GM12878 (cell line): ENCODE measurements at regions of chr12 and their contacts with region 1.

Region 1: GRCh38 chr12:12356886-12357718 is at the start of gene BORCS5:
- DNase-seq: peak; percentile 94
- ATAC-seq: peak; percentile 92
- H3K4me3 ChIP-seq: peak within 1 kb of the TSS; percentile 71
- H3K27ac ChIP-seq: peak within 1 kb of the TSS; percentile 97
- H3K4me1 ChIP-seq: no peaks in the 10 kb centered on the region
- H3K27me3 ChIP-seq: no peaks in the 10 kb centered on the region
- CTCF ChIP-seq: peak; percentile 2 to 35 (median 24); a peak in 3 of 6 replicates
- EP300 ChIP-seq: peak in 1 of 2 experiments; percentile 59; a peak in 2 of 4 replicates
- POLR2A ChIP-seq: peak; percentile 96
- RAD21 ChIP-seq: no peak
- polyA plus RNA-seq, gene BORCS5: 1.4 to 1.7 TPM

Region 2: GRCh38 chr12:12081836-12082497 is 275.1 kb before region 1 on chr12:
- CTCF ChIA-PET with region 1: interaction called, 10 read pairs
- POLR2A ChIA-PET with region 1: no interaction called
- RAD21 ChIA-PET with region 1: interaction called, 14 read pairs
- SMC1A ChIA-PET with region 1: interaction called, 3 read pairs
- in situ Hi-C with region 1: no loop called
- intact Hi-C with region 1: no loop called
- DNase-seq: peak; percentile 39
- ATAC-seq: peak; percentile 96
- H3K4me3 ChIP-seq: no peak overlapping the region
- H3K27ac ChIP-seq: no peak overlapping the region
- H3K4me1 ChIP-seq: no peaks in the 10 kb centered on the region
- H3K27me3 ChIP-seq: no peaks in the 10 kb centered on the region
- CTCF ChIP-seq: peak; percentile 33 to 54 (median 34); a peak in 4 of 6 replicates
- EP300 ChIP-seq: no peak
- POLR2A ChIP-seq: no peak
- RAD21 ChIP-seq: peak; percentile 80

Region 3: DNA sequence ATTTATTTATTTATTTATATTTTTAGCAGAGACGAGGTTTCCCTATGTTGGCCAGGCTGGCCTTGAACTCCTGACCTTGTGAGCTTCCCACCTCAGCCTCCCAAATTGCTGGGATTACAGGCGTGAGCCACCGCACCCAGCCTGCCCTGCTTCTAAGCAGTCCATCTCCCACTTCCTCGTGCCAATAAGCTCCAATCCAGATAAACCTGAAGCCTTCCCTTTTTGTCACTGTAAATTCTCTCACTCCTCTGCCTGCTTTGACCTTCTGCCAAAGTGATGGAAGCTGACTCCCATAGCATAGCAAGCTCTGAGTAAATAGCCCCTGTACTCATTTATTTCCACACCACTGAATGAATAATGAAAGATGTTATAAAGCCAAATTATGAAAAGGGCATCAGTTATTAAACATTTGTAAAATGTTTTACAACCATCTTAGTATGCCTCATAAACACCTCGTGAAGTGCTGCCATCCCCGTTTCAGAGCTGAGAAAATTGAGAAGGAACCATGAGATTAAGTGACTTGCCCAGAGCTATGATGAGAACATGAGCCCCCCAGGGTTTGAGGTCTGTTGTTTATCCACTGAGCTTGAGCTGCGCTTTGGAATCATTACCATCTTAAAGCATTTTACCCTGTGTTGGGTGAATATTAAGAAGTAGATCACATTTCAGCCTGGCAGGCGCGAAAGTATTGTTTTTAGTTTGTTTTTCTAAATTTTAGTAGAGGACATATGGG is 37.5 kb before region 1 on chr12:
- CTCF ChIA-PET with region 1: no interaction called
- POLR2A ChIA-PET with region 1: no interaction called
- RAD21 ChIA-PET with region 1: no interaction called
- SMC1A ChIA-PET with region 1: no interaction called
- in situ Hi-C with region 1: no loop called
- intact Hi-C with region 1: no loop called
- DNase-seq: no peak
- ATAC-seq: no peak
- H3K4me3 ChIP-seq: no peak overlapping the region
- H3K27ac ChIP-seq: no peak overlapping the region
- H3K4me1 ChIP-seq: no peaks in the 10 kb centered on the region
- H3K27me3 ChIP-seq: no peaks in the 10 kb centered on the region
- CTCF ChIP-seq: no peak
- EP300 ChIP-seq: no peak
- POLR2A ChIP-seq: no peak
- RAD21 ChIP-seq: no peak

Region 4: DNA sequence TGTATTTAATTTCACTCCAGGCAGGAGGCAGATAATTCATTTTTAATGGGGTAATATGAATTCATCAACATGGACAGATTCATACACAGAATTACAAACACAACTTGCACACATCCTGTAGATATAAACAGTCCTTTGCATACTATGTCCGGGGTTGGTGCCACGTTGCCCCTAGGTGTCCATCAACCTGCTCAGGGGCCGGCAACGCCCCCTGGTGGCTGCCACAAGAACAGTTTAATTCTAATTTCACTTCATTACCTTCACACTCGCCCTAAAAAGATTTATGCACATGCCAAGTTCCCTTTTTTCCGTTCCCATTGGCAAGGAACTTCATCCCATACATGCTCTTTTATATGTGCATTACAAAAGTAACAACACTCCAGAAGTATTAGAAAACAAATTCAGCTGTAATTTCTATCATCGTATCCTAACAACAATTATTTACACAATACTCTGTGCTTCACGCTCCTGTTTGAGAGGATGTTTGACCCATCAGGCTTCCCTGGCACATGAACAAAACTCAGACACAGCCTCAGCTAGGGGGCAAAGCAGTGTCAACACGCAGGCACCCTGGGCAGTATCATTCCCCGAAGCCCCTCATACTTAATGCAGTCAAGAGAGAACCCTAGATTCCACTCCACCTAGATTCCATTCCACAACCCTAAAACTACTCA is 22.6 kb before region 1 on chr12:
- CTCF ChIA-PET with region 1: interaction called, 32 read pairs
- POLR2A ChIA-PET with region 1: interaction called, 3 read pairs
- RAD21 ChIA-PET with region 1: interaction called, 6 read pairs
- SMC1A ChIA-PET with region 1: interaction called, 8 read pairs
- in situ Hi-C with region 1: no loop called
- intact Hi-C with region 1: no loop called
- DNase-seq: peak; percentile 19
- ATAC-seq: peak; percentile 90
- H3K4me3 ChIP-seq: no peak overlapping the region
- H3K27ac ChIP-seq: no peak overlapping the region
- H3K4me1 ChIP-seq: 0 out of 2 replicates have a peak, but pooled peaks cover 3% of the 10 kb centered on the region
- H3K27me3 ChIP-seq: no peaks in the 10 kb centered on the region
- CTCF ChIP-seq: peak; percentile 81 to 89 (median 82)
- EP300 ChIP-seq: no peak
- POLR2A ChIP-seq: no peak
- RAD21 ChIP-seq: peak; percentile 58

Region 5: GRCh38 chr12:12384571-12385340 is 27.7 kb after region 1 on chr12:
- CTCF ChIA-PET with region 1: no interaction called
- POLR2A ChIA-PET with region 1: interaction called, 3 read pairs
- RAD21 ChIA-PET with region 1: interaction called, 8 read pairs
- SMC1A ChIA-PET with region 1: interaction called, 17 read pairs
- in situ Hi-C with region 1: no loop called
- intact Hi-C with region 1: no loop called
- DNase-seq: no peak
- ATAC-seq: peak; percentile 88
- H3K4me3 ChIP-seq: no peak overlapping the region
- H3K27ac ChIP-seq: no peak overlapping the region
- H3K4me1 ChIP-seq: peaks cover 7% of the 10 kb centered on the region
- H3K27me3 ChIP-seq: no peaks in the 10 kb centered on the region
- CTCF ChIP-seq: no peak
- EP300 ChIP-seq: 0 out of 4 replicates have a peak, but pooled peaks of 1 of the 2 experiments have one; percentile 11
- POLR2A ChIP-seq: no peak
- RAD21 ChIP-seq: no peak

Region 6: GRCh38 chr12:12716793-12717585 is 359.9 kb after region 1 on chr12 and contains the start of gene CDKN1B:
- CTCF ChIA-PET with region 1: interaction called, 7 read pairs
- POLR2A ChIA-PET with region 1: interaction called, 23 read pairs
- RAD21 ChIA-PET with region 1: interaction called, 10 read pairs
- SMC1A ChIA-PET with region 1: interaction called, 5 read pairs
- in situ Hi-C with region 1: no loop called
- intact Hi-C with region 1: loop called (anchors 5 kb)
- DNase-seq: peak; percentile 58
- ATAC-seq: peak; percentile 74
- H3K4me3 ChIP-seq: peak within 1 kb of the TSS; percentile 97
- H3K27ac ChIP-seq: peak within 1 kb of the TSS; percentile 97
- H3K4me1 ChIP-seq: peaks cover 20% of the 10 kb centered on the region
- H3K27me3 ChIP-seq: no peaks in the 10 kb centered on the region
- CTCF ChIP-seq: no peak
- EP300 ChIP-seq: no peak
- POLR2A ChIP-seq: peak; percentile 75
- RAD21 ChIP-seq: no peak
- polyA plus RNA-seq, gene CDKN1B: 4.2 to 8.0 TPM